Dorsolateral prefrontal cortex (tissue), 120 donors: ENCODE measurements at regions of chr5 and their contacts with region 1.

Region 1: DNA sequence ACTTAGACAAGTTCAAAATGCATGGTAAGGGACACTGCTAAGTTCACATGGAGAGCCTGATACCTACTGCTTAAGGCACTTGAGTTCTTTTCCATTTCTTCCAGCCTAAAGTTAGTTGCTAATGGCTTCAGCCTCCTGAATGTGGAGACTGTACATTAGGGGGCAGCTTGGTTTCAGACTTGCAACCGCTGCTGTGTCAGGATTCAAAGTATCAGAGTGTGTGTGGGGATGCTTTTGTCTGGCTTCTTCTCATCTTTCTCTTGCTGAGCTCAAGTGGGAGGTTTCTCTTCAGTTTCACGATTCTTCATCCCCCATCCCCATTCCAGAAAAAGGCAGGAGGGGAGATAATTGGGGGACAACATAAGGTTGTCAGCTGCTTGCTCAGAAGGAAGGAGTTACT is 49.4 kb downstream of the ATP10B start:
- DNase-seq: peak in 6 of 10 donors; percentile 16 to 58 (median 52)
- H3K4me3 ChIP-seq: no peak overlapping the region
- H3K27ac ChIP-seq: peak overlapping the region in 23 of 59 donors; percentile 4 to 58 (median 36)
- H3K27me3 ChIP-seq: no peaks in the 10 kb centered on the region
- CTCF ChIP-seq: peak in 54 of 56 donors; percentile 28 to 76 (median 55)

Region 2: GRCh38 chr5:160843240-160843639 is 40.6 kb after region 1 on chr5:
- intact Hi-C with region 1: loop called in 1 of 2 experiments (anchors 5 kb)
- DNase-seq: no peak
- H3K4me3 ChIP-seq: no peak overlapping the region
- H3K27ac ChIP-seq: no peak overlapping the region
- H3K27me3 ChIP-seq: no peaks in the 10 kb centered on the region
- CTCF ChIP-seq: no peak

Region 3: DNA sequence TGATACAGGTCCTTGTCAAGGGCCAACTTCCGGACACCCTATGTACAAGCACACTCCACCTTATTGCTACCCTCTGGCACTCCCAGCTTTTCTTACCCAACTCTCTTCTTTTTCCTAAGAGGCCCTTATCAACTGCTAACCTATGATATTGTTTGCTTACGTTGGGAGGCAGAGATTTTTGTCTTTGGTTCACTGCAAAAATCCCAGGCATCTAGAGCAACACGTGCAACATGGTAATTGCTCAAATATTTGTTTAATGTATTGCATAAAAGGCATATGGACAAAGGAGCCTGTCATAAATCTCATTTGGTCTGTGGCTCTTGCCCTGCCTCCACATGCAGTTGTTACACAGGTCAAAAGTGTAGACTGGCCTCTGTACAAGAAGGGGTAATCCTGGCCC is 85.2 kb after region 1 on chr5:
- intact Hi-C with region 1: no loop called
- DNase-seq: no peak
- H3K4me3 ChIP-seq: no peak overlapping the region
- H3K27ac ChIP-seq: no peak overlapping the region
- H3K27me3 ChIP-seq: no peaks in the 10 kb centered on the region
- CTCF ChIP-seq: no peak

Region 4: GRCh38 chr5:160926428-160926827 is 123.8 kb after region 1 on chr5:
- intact Hi-C with region 1: loop called in 1 of 2 experiments (anchors 5 kb)
- DNase-seq: peak in 3 of 10 donors; percentile 24 to 34 (median 29)
- H3K4me3 ChIP-seq: no peak overlapping the region
- H3K27ac ChIP-seq: peak overlapping the region in 4 of 59 donors; percentile 7 to 56 (median 24)
- H3K27me3 ChIP-seq: no peaks in the 10 kb centered on the region
- CTCF ChIP-seq: no peak